ENCODE measurements at regions of chr7 and their contacts with region 1.

Region 1: DNA sequence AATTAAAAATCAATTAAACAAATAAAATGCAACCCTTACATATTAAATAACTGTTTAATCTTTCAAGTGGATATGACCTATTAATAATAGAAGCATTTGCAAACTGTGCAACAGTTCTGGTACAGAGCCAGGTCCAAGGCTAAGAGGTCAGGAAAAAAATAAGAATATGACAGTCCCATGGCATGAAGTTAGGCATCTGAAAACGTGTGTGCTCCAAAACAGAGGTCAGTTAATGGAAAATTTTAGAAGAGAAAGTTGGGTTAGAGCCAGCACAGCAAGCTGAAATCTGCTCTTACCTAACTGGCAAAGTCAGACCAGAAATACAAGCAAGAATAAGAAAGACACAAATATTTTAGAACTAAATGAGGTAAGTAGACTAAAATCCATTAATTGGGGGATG is 757.7 kb downstream of the GRM8 start:
- DNase-seq: peak in 1 of 2 donors; percentile 25
- ATAC-seq: peak; percentile 34 to 89 (median 69)
- H3K4me3 ChIP-seq: peak overlapping the region in 6 of 10 donors; percentile 12 to 33 (median 28)
- H3K27ac ChIP-seq: peak overlapping the region in 7 of 10 donors; percentile 12 to 73 (median 64)
- H3K4me1 ChIP-seq: peaks cover 0 to 18% (median 0%) of the 10 kb centered on the region in 9 donors
- H3K27me3 ChIP-seq: no peaks in the 10 kb centered on the region
- CTCF ChIP-seq: no peak

Region 2: DNA sequence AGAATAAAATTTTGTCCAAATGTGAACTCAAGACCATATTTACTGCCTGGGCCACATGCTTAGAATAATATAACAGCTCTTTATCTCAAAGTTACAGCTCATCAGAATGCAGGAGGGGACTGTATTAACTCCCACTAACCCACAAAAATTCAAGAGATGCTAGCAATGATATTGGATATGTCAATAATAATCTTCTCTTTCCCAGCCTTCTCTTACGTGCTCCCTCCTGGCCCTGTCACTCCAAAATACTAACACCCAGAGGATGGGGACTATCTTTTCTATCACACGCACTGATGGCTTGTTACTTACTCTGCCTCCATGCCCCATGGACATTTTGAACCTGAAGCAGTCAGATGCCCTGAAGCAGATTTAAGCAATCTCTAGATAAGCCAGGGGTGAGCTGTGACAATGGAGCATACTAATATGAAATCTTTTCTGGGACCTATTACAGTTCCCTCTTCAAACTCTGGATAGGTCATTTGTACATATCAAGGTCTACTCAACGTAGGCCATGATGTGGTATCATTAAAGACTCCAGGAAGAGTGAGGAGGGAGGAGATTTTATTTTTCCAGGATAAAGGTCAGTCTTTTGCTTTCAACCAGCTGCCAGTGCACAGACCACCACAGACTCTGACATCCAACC is 45.3 kb before region 1 on chr7:
- intact Hi-C with region 1: loop called in 1 of 10 experiments (anchors 10 kb)
- DNase-seq: no peak
- ATAC-seq: peak in 4 of 8 donors; percentile 16 to 52 (median 36)
- H3K4me3 ChIP-seq: no peak overlapping the region
- H3K27ac ChIP-seq: peak overlapping the region in 3 of 10 donors; percentile 18 to 32 (median 21)
- H3K4me1 ChIP-seq: peaks cover 0 to 13% (median 0%) of the 10 kb centered on the region in 9 donors
- H3K27me3 ChIP-seq: no peaks in the 10 kb centered on the region
- CTCF ChIP-seq: no peak

Region 3: DNA sequence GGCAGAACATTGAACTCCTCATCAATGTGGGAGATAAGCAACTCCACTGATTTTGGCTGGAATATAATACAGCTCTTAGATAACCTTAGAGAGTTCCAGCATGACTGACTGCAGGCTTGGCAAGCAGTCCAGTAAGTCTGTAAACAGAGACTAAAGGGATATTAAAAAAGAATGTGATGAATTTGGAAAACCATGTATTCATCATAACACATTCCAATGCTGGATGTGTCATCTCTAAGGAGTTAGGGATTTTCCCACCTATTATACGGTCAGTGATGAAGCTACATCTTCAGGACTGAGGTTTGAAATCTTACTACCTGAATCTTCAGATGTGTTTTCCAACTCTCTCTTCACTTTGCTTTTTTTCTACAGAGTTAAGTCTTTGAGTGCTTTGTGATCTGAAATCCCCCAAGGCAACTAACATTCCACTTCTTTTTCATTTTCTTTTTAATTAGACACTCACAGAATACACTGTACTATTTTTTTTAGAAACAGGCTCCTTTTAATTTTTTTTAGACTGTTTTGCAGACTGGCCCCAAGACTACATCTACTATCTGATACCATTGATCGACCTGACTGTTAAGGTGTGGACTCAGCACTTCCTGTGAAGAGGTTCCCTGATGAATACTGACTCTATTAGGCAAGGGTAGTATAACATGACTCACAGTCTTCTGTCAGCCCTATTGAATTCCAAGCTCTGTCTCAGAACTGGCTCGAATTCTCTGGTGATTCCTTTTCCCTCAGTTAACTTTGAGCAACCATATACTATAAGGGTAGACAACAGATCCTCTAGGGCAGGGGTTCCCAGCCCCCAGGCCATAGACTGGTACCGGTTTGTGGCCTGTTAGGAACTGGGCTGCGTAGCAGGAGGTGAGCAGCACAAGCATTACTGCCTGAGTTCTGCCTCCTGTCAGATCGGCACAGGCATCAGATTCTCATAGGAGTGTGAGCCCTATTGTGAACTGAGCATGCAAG is 79.6 kb after region 1 on chr7:
- intact Hi-C with region 1: no loop called
- DNase-seq: no peak
- ATAC-seq: no peak
- H3K4me3 ChIP-seq: no peak overlapping the region
- H3K27ac ChIP-seq: no peak overlapping the region
- H3K4me1 ChIP-seq: no peaks in the 10 kb centered on the region
- H3K27me3 ChIP-seq: no peaks in the 10 kb centered on the region
- CTCF ChIP-seq: no peak